T-cell (primary cell): ENCODE measurements at regions of chr20 and their contacts with region 1.

Region 1: GRCh38 chr20:35410613-35411012 is 1.2 kb downstream of the UQCC1 start:
- DNase-seq: no peak
- ATAC-seq: no peak
- H3K4me3 ChIP-seq: no peak overlapping the region
- H3K4me3 Mint-ChIP-seq: peak overlapping the region; percentile 91 to 97 (median 93)
- H3K27ac ChIP-seq: no peak overlapping the region
- H3K27ac Mint-ChIP-seq: peak overlapping the region in 1 of 2 donors; percentile 49
- H3K4me1 ChIP-seq: peaks cover 10 to 16% of the 10 kb centered on the region in 2 experiments
- H3K4me1 Mint-ChIP-seq: peaks cover 14 to 23% (median 20%) of the 10 kb centered on the region in 3 donors
- H3K27me3 ChIP-seq: no peaks in the 10 kb centered on the region
- H3K27me3 Mint-ChIP-seq: peaks cover 2 to 5% of the 10 kb centered on the region in 2 donors

Region 2: GRCh38 chr20:35023624-35024023 is 387.0 kb before region 1 on chr20:
- CTCF ChIA-PET with region 1: no interaction called
- POLR2A ChIA-PET with region 1: interaction called in 1 of 2 experiments, 10 read pairs
- DNase-seq: no peak
- ATAC-seq: no peak
- H3K4me3 ChIP-seq: no peak overlapping the region
- H3K4me3 Mint-ChIP-seq: no peak overlapping the region
- H3K27ac ChIP-seq: no peak overlapping the region
- H3K27ac Mint-ChIP-seq: no peak overlapping the region
- H3K4me1 ChIP-seq: no peaks in the 10 kb centered on the region
- H3K4me1 Mint-ChIP-seq: no peaks in the 10 kb centered on the region
- H3K27me3 ChIP-seq: no peaks in the 10 kb centered on the region
- H3K27me3 Mint-ChIP-seq: no peaks in the 10 kb centered on the region